Activated CD8-positive, alpha-beta memory T cell treated with anti-CD3 and anti-CD28 coated beads, Interleukin-2, amount 10 ng/mL, durations not matched to agents 7 days and 5 days (primary cell): ENCODE measurements at regions of chr22 and their contacts with region 1.

Region 1: GRCh38 chr22:41697126-41697775 is 2.1 kb upstream of the MEI1 start:
- DNase-seq: peak; percentile 92
- ATAC-seq: peak; percentile 82
- H3K4me3 Mint-ChIP-seq: no peak overlapping the region
- H3K27ac Mint-ChIP-seq: peak overlapping the region; percentile 79
- H3K4me1 Mint-ChIP-seq: peaks cover 9% of the 10 kb centered on the region
- H3K27me3 Mint-ChIP-seq: peaks cover 5% of the 10 kb centered on the region

Region 2: GRCh38 chr22:41603873-41604332 is 93.3 kb before region 1 on chr22:
- CTCF ChIA-PET with region 1: no interaction called
- DNase-seq: peak; percentile 90
- ATAC-seq: peak; percentile 95
- H3K4me3 Mint-ChIP-seq: peak overlapping the region; percentile 5
- H3K27ac Mint-ChIP-seq: peak overlapping the region; percentile 79
- H3K4me1 Mint-ChIP-seq: peaks cover 47% of the 10 kb centered on the region
- H3K27me3 Mint-ChIP-seq: no peaks in the 10 kb centered on the region

Region 3: GRCh38 chr22:41739576-41739975 is 42.3 kb after region 1 on chr22:
- CTCF ChIA-PET with region 1: interaction called, 11 read pairs
- DNase-seq: peak; percentile 47
- ATAC-seq: peak; percentile 70
- H3K4me3 Mint-ChIP-seq: no peak overlapping the region
- H3K27ac Mint-ChIP-seq: no peak overlapping the region
- H3K4me1 Mint-ChIP-seq: peaks cover 7% of the 10 kb centered on the region
- H3K27me3 Mint-ChIP-seq: peaks cover 3% of the 10 kb centered on the region

Region 4: GRCh38 chr22:41746567-41747400 is 49.5 kb after region 1 on chr22:
- CTCF ChIA-PET with region 1: interaction called, 29 read pairs
- DNase-seq: peak; percentile 72
- ATAC-seq: peak; percentile 96
- H3K4me3 Mint-ChIP-seq: no peak overlapping the region
- H3K27ac Mint-ChIP-seq: no peak overlapping the region
- H3K4me1 Mint-ChIP-seq: peaks cover 6% of the 10 kb centered on the region
- H3K27me3 Mint-ChIP-seq: peaks cover 15% of the 10 kb centered on the region

Region 5: DNA sequence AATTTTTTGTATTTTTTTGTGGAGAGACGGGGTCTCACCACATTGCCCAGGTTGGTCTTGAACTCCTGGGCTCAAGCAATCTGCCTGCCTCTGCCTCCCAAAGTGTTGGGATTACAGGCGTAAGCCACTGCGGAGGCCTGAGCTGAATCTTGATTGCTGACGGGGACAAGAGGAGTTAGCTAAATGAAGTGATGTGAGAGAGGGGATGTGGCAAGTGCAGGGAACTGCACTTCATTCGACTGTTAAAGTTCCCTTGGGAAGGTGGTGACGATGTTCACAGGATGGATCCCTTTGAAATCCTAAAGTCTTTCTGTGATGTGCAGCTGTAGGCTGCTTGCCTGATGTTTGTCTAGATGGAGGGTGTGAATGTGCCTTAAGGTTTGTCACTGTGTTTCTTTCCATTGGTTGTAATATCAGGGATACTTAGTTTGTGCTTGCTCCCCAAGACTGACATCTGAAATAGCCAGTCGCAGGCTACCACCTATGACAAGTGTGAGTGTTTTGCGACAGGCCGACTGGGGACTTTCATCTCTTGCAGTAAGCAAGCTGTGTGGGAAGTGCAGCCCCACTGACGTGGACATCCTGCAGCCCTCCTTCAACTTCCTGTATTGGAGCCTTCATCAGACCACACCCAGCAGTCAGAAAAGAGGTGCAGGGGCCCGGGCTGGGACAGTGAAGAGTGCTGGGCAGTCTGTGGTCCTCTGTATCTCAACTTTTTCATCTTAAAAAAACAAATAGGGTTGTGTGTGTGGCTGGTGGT is 83.7 kb after region 1 on chr22:
- CTCF ChIA-PET with region 1: interaction called, 24 read pairs
- DNase-seq: peak; percentile 98
- ATAC-seq: peak; percentile 97
- H3K4me3 Mint-ChIP-seq: peak overlapping the region; percentile 76
- H3K27ac Mint-ChIP-seq: peak overlapping the region; percentile 99
- H3K4me1 Mint-ChIP-seq: peaks cover 41% of the 10 kb centered on the region
- H3K27me3 Mint-ChIP-seq: no peaks in the 10 kb centered on the region

Region 6: GRCh38 chr22:41800348-41801146 is 103.3 kb after region 1 on chr22 and contains the start of gene CCDC134:
- CTCF ChIA-PET with region 1: interaction called, 39 read pairs
- DNase-seq: peak; percentile 94
- ATAC-seq: peak; percentile 97
- H3K4me3 Mint-ChIP-seq: peak within 1 kb of the TSS; percentile 93
- H3K27ac Mint-ChIP-seq: peak within 1 kb of the TSS; percentile 97
- H3K4me1 Mint-ChIP-seq: peaks cover 45% of the 10 kb centered on the region
- H3K27me3 Mint-ChIP-seq: no peaks in the 10 kb centered on the region
- total RNA-seq, gene CCDC134: 25.3 to 27.9 TPM

Region 7: DNA sequence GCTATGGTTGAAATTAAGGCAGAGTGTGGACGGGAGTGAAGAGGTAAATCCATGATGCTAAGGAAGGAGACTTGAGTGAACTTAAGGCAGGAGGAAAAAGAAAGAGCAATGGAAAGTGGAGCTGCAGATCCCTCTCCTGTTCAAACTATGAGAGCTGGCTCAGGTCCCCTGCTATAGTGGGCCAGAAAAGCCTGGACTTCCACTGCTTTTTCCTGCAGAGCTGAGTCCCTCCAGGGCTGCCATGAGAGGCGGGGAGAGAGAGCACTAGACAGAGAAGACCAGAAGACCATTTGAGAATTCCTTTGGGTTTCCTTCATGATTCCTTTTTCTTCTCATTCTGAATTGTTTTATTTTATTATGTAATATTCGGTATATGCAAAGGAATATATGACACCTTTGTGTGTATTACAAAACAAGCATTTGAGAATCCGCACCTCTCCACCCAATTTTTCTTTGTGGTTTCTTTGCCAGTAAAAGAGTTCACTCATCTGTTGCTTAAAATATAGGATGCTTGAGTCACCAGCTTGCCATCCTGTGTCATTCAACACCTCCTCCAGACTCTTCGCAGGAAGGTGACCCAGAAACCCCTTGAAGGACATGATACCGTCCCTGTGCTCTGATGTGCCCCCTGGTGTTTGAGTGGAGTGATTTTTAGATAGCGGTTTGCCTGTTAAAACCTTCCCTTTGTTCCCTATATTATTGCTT is 160.1 kb after region 1 on chr22:
- CTCF ChIA-PET with region 1: interaction called, 40 read pairs
- DNase-seq: peak; percentile 85
- ATAC-seq: peak; percentile 73
- H3K4me3 Mint-ChIP-seq: no peak overlapping the region
- H3K27ac Mint-ChIP-seq: peak overlapping the region; percentile 79
- H3K4me1 Mint-ChIP-seq: peaks cover 67% of the 10 kb centered on the region
- H3K27me3 Mint-ChIP-seq: no peaks in the 10 kb centered on the region

Region 8: GRCh38 chr22:41946629-41947423 is 249.6 kb after region 1 on chr22 and contains the start of gene CENPM:
- CTCF ChIA-PET with region 1: interaction called, 62 read pairs
- DNase-seq: peak; percentile 97
- ATAC-seq: peak; percentile 97
- H3K4me3 Mint-ChIP-seq: peak within 1 kb of the TSS; percentile 93
- H3K27ac Mint-ChIP-seq: peak within 1 kb of the TSS; percentile 92
- H3K4me1 Mint-ChIP-seq: peaks cover 44% of the 10 kb centered on the region
- H3K27me3 Mint-ChIP-seq: no peaks in the 10 kb centered on the region
- total RNA-seq, gene CENPM: 74.0 to 95.8 TPM